Naive thymus-derived CD4-positive, alpha-beta T cell (primary cell): ENCODE measurements at regions of chr6 and their contacts with region 1.

Region 1: GRCh38 chr6:116695401-116695800 is 14.4 kb downstream of the KPNA5 start:
- DNase-seq: no peak
- ATAC-seq: peak; percentile 57
- H3K4me3 ChIP-seq: no peak overlapping the region
- H3K4me3 Mint-ChIP-seq: peak overlapping the region in 2 of 10 donors; percentile 44 to 72
- H3K27ac ChIP-seq: no peak overlapping the region
- H3K27ac Mint-ChIP-seq: peak overlapping the region in 3 of 9 donors; percentile 5 to 63 (median 53)
- H3K4me1 ChIP-seq: no peaks in the 10 kb centered on the region
- H3K4me1 Mint-ChIP-seq: peaks cover 29 to 58% (median 52%) of the 10 kb centered on the region in 7 donors
- H3K27me3 ChIP-seq: no peaks in the 10 kb centered on the region
- H3K27me3 Mint-ChIP-seq: no peaks in the 10 kb centered on the region

Region 2: DNA sequence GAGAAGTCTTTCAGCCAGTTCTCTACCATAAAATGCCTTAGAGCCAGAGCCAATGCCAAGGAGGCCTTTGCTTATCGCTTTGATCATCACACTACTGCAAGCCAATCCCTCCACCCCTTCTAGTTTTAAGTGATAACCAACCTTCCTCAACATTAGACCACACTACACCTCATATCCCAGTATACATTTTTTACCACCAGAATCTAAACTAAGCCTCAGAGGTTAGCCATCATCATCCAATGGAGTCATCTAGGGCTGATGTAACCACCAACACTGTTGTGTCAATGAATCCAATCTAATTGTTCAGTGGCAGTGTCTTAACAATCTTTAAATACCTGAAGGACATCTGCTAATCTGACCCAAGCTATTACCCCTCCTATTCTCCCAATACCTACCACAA is 33.2 kb before region 1 on chr6:
- CTCF ChIA-PET with region 1: interaction called, 3 read pairs
- POLR2A ChIA-PET with region 1: no interaction called
- intact Hi-C with region 1: loop called in 1 of 2 experiments (anchors 5 kb)
- DNase-seq: no peak
- ATAC-seq: no peak
- H3K4me3 ChIP-seq: no peak overlapping the region
- H3K4me3 Mint-ChIP-seq: peak overlapping the region in 4 of 10 donors; percentile 4 to 53 (median 10)
- H3K27ac ChIP-seq: no peak overlapping the region
- H3K27ac Mint-ChIP-seq: peak overlapping the region in 3 of 9 donors; percentile 1 to 60 (median 8)
- H3K4me1 ChIP-seq: peaks cover 19 to 21% of the 10 kb centered on the region in 2 donors
- H3K4me1 Mint-ChIP-seq: peaks cover 37 to 63% (median 61%) of the 10 kb centered on the region in 7 donors
- H3K27me3 ChIP-seq: no peaks in the 10 kb centered on the region
- H3K27me3 Mint-ChIP-seq: no peaks in the 10 kb centered on the region